ENCODE measurements at regions of chr12 and their contacts with region 1.

Region 1: GRCh38 chr12:49673446-49674317 is 33.5 kb downstream of the FMNL3 start:
- DNase-seq: no peak
- ATAC-seq: no peak
- H3K4me3 Mint-ChIP-seq: peak overlapping the region; percentile 52
- H3K27ac Mint-ChIP-seq: peak overlapping the region; percentile 95
- H3K4me1 Mint-ChIP-seq: peaks cover 85% of the 10 kb centered on the region
- H3K27me3 Mint-ChIP-seq: no peaks in the 10 kb centered on the region
- CTCF ChIP-seq: no peak

Region 2: DNA sequence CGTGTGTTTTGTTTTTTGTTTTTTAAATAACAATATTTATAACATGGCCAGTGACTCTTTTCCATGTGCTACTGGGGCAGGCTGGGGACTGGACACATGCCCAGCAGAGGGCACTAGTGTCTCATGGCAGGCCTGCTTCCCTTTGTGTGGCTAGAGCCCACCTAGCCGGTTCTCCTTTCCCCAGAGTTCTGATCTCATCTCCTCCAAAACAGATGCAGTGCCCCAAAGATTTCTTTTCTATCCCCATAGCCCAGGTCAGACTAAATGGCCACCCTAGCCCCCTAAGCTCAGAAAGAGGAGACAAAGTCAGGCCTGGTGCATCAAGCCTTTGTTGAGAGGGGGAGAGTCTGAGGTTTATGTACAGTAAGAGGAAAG is 29.1 kb before region 1 on chr12:
- CTCF ChIA-PET with region 1: interaction called, 7 read pairs
- POLR2A ChIA-PET with region 1: interaction called, 15 read pairs
- intact Hi-C with region 1: no loop called
- DNase-seq: peak; percentile 71
- ATAC-seq: peak; percentile 92
- H3K4me3 Mint-ChIP-seq: peak overlapping the region; percentile 12
- H3K27ac Mint-ChIP-seq: peak overlapping the region; percentile 81
- H3K4me1 Mint-ChIP-seq: peaks cover 24% of the 10 kb centered on the region
- H3K27me3 Mint-ChIP-seq: no peaks in the 10 kb centered on the region
- CTCF ChIP-seq: peak; percentile 93

Region 3: DNA sequence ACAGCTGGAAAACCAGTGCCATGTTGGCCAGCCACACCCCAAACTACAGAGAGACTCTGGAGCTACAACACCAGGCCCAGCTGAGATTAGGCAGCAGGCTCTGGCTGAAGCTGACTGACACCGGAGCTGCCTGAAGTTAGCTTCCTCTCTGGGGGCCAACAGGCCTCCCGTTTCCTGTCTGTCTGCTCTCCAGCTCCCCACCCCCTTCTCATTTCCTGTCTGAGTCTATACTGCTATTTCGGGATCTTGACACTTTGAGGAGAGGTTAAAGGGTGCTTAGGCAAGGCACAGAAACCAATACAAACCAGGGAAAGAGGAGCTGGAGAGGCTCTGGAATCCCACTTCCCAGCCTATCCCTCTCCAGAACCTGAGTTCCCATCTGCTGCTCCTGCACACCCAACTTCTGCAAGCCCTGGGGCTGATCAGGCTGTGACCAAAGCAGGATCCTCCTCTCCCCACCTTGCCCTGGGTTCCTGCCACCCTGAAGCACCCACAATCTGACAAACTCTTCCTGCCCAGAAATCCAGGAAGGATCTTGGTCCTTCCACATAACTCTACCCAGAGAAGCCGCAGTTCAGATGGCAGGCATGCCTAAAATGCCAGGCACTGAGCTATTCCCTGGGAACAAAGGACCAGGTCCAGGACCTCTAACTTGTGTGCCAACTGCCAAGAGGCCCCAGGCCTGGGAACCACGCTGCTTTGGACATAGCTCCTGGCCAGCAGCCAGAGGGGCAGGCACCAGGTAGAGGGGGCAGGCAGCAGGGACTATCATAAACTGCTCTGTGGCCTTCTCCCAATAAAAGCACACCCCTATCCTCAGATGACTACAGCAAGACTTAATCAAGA is 10.5 kb before region 1 on chr12:
- CTCF ChIA-PET with region 1: interaction called, 4 read pairs
- POLR2A ChIA-PET with region 1: interaction called, 63 read pairs
- intact Hi-C with region 1: loop called (anchors 1 kb)
- DNase-seq: peak; percentile 48
- ATAC-seq: peak; percentile 83
- H3K4me3 Mint-ChIP-seq: peak overlapping the region; percentile 80
- H3K27ac Mint-ChIP-seq: peak overlapping the region; percentile 94
- H3K4me1 Mint-ChIP-seq: peaks cover 85% of the 10 kb centered on the region
- H3K27me3 Mint-ChIP-seq: no peaks in the 10 kb centered on the region
- CTCF ChIP-seq: no peak

Region 4: GRCh38 chr12:49683599-49684309 is 10.1 kb after region 1 on chr12:
- CTCF ChIA-PET with region 1: interaction called, 8 read pairs
- POLR2A ChIA-PET with region 1: interaction called, 13 read pairs
- intact Hi-C with region 1: loop called (anchors 1 kb)
- DNase-seq: no peak
- ATAC-seq: no peak
- H3K4me3 Mint-ChIP-seq: no peak overlapping the region
- H3K27ac Mint-ChIP-seq: peak overlapping the region; percentile 42
- H3K4me1 Mint-ChIP-seq: peaks cover 72% of the 10 kb centered on the region
- H3K27me3 Mint-ChIP-seq: no peaks in the 10 kb centered on the region
- CTCF ChIP-seq: no peak

Region 5: DNA sequence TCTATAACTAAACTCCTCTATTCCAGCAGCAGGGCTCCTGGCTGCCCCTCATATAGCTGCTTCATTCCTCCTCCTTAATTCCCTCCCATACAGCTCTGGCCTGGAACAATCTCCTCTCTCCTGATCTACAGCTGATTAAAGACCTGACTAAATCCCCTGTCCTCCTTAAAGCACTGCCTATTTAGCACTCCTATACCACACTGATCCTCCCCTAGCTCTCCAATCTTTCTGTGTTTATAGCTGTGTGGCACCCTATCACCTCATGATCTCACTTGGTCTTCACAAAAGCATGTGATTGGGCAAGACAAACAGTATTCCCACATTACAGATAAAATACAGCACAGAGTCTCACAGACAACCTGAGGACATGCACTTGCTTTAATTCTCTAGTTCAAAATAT is 16.1 kb after region 1 on chr12:
- CTCF ChIA-PET with region 1: interaction called, 8 read pairs
- POLR2A ChIA-PET with region 1: interaction called, 13 read pairs
- intact Hi-C with region 1: no loop called
- DNase-seq: no peak
- ATAC-seq: peak; percentile 13
- H3K4me3 Mint-ChIP-seq: no peak overlapping the region
- H3K27ac Mint-ChIP-seq: no peak overlapping the region
- H3K4me1 Mint-ChIP-seq: peaks cover 62% of the 10 kb centered on the region
- H3K27me3 Mint-ChIP-seq: no peaks in the 10 kb centered on the region
- CTCF ChIP-seq: no peak

Region 6: DNA sequence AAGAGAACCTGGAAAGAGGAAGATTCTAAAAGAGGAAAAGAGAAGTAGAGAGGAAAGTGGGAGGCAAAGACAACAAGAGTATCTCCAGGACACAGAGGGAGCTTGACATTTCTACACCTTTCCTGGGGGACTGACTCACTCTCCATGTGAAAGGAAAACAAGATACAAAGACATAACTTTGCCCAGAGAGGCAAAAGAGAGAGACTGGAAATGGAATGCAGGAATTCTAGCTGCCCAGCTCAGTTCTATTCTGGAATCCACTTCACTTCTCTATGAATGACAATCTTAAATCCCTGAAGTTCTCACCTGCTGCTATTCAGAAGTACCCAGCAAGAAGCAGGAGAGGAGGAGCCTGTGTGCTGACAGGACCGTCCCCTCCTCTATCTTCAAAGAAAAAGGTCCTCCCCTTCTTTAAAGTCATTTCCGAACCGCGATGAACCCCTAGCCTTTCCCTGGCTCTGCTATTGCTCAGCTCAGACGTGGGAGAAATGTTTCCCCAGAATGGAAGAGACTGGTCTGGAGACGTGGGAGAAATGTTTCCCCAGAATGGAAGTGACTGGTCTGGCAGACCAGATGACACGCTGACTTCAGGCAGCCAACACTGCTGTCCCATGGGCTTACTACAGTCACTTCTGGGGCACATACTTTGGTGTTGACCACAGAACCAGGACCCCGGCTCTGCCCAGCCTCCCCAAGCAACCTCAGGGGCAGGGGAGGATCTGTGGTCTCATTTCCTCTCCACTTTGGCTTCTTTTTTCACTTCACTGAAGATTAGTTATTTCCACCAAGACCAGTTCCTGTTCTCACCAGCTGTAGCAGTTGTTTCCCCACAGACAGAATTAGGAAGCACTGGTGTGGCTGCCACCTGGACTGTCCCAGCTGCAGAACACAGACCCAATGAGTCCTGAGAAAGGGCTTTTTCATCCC is 25.2 kb after region 1 on chr12:
- CTCF ChIA-PET with region 1: interaction called, 22 read pairs
- POLR2A ChIA-PET with region 1: interaction called, 265 read pairs
- intact Hi-C with region 1: loop called (anchors 1 kb)
- DNase-seq: peak; percentile 57
- ATAC-seq: peak; percentile 82
- H3K4me3 Mint-ChIP-seq: peak overlapping the region; percentile 84
- H3K27ac Mint-ChIP-seq: peak overlapping the region; percentile 96
- H3K4me1 Mint-ChIP-seq: peaks cover 83% of the 10 kb centered on the region
- H3K27me3 Mint-ChIP-seq: no peaks in the 10 kb centered on the region
- CTCF ChIP-seq: no peak

Region 7: GRCh38 chr12:49945394-49946080 is 271.9 kb after region 1 on chr12:
- CTCF ChIA-PET with region 1: no interaction called
- POLR2A ChIA-PET with region 1: no interaction called
- intact Hi-C with region 1: no loop called
- DNase-seq: peak; percentile 67
- ATAC-seq: peak; percentile 99
- H3K4me3 Mint-ChIP-seq: peak overlapping the region; percentile 77
- H3K27ac Mint-ChIP-seq: no peak overlapping the region
- H3K4me1 Mint-ChIP-seq: peaks cover 14% of the 10 kb centered on the region
- H3K27me3 Mint-ChIP-seq: peaks cover 6% of the 10 kb centered on the region
- CTCF ChIP-seq: peak; percentile 65

Measured in activated B cell treated with CpG ODN at 0.5 μM for 24 hours (primary cell).